CD4-positive, alpha-beta memory T cell (primary cell): ENCODE measurements at regions of chr17 and their contacts with region 1.

Region 1: DNA sequence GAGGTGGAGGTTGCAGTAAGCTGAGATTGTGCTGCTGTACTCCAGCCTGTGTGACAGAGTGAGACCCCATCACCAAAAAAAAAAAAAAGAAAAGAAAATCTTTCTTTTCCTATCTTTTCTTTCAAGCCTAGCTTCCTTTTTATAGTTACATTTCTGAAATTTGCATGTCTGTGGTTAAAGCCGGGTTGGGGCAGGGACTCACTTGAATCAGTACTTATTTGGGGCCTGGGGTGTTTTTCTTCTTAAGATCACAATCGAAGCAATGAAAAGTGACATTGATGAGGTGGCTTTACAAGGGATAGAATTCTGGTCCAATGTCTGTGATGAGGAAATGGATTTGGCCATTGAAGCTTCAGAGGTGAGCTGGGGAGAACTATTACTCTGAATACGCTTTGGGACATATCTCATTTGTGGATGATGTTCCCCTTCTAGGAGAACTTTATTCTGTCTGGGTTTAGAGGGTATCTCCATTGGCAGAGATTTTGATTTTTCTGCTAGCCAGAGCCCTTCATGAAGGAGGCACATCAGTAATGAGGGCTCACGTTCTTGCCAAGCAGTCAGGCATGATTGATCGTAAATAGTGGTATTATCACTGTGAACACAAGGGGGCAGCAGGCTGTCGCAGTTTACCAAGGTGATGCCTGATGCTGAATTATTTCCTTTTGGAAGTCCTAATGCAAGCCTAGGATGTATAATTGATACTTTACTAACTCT is 14.3 kb downstream of the KPNB1 start:
- DNase-seq: peak; percentile 63 to 73 (median 68)
- H3K4me3 ChIP-seq: no peak overlapping the region
- H3K4me3 Mint-ChIP-seq: peak overlapping the region in 1 of 8 donors; percentile 0
- H3K27ac ChIP-seq: peak overlapping the region; percentile 22
- H3K27ac Mint-ChIP-seq: peak overlapping the region; percentile 24 to 90 (median 77)
- H3K4me1 ChIP-seq: peaks cover 32% of the 10 kb centered on the region
- H3K4me1 Mint-ChIP-seq: peaks cover 12 to 22% (median 14%) of the 10 kb centered on the region in 4 donors
- H3K27me3 ChIP-seq: no peaks in the 10 kb centered on the region
- H3K27me3 Mint-ChIP-seq: no peaks in the 10 kb centered on the region

Region 2: DNA sequence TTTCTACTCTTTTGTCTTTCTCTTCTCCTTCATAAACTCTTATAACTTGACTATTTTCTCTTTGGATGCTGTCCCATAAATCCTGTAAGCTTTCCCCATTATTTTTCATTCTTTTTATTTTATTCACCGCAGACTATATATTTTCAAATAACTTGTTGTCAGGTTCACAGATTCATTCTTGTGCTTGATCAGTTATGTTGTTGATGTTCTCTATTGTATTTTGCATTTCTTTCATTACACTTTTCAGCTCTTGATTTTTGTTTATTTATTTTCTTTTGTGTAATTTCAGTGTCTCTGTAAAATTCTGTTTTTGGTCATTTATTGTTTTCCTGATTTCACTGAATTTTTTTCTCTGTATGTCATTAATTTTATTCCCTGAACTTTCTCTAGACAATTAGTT is 291.1 kb before region 1 on chr17:
- CTCF ChIA-PET with region 1: no interaction called
- POLR2A ChIA-PET with region 1: no interaction called
- intact Hi-C with region 1: no loop called
- DNase-seq: no peak
- H3K4me3 ChIP-seq: no peak overlapping the region
- H3K4me3 Mint-ChIP-seq: no peak overlapping the region
- H3K27ac ChIP-seq: no peak overlapping the region
- H3K27ac Mint-ChIP-seq: no peak overlapping the region
- H3K4me1 ChIP-seq: no peaks in the 10 kb centered on the region
- H3K4me1 Mint-ChIP-seq: no peaks in the 10 kb centered on the region
- H3K27me3 ChIP-seq: no peaks in the 10 kb centered on the region
- H3K27me3 Mint-ChIP-seq: peaks cover 3 to 4% of the 10 kb centered on the region in 2 donors

Region 3: DNA sequence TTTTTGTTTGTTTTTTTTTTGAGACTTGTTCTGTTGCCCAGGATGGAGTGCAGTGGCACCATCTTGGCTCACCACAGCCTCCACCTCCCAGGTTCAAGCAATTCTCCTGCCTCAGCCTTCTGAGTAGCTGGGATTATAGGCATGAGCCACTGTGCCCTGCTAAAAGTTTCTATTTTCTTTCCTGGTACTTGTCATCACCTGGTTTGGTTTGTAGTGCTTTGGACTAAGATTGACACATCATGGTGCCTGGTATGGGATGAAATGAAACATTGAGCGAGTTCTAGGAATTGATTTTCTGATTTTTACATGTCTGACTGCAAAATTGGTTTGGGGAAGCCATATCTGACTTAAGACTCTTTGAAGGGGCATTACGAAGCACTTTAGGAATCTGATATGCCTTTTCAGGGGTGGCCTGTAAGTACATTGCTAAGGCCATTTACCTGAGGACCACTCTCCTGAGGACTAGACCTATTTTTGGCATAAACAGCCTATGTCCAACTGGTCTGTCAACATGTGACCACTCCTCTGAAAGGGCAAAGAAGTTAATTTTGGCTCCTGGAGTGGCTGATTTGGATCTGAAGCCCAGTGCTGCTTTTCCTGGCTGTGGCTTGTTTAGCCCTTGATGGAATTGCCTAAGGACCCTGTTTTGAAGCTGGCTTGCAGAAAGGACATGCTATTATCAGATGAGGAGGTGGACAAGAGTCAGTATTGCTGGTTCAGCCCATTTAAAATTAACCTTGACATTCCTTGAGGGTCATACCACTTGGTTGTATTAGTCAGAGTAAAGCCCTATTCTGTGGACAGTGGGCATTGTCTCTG is 11.5 kb after region 1 on chr17:
- CTCF ChIA-PET with region 1: interaction called, 100 read pairs
- POLR2A ChIA-PET with region 1: interaction called, 3 read pairs
- intact Hi-C with region 1: no loop called
- DNase-seq: no peak
- H3K4me3 ChIP-seq: no peak overlapping the region
- H3K4me3 Mint-ChIP-seq: no peak overlapping the region
- H3K27ac ChIP-seq: no peak overlapping the region
- H3K27ac Mint-ChIP-seq: peak overlapping the region in 6 of 7 donors; percentile 4 to 78 (median 68)
- H3K4me1 ChIP-seq: peaks cover 1% of the 10 kb centered on the region
- H3K4me1 Mint-ChIP-seq: peaks cover 0 to 15% (median 8%) of the 10 kb centered on the region in 4 donors
- H3K27me3 ChIP-seq: no peaks in the 10 kb centered on the region
- H3K27me3 Mint-ChIP-seq: no peaks in the 10 kb centered on the region

Region 4: DNA sequence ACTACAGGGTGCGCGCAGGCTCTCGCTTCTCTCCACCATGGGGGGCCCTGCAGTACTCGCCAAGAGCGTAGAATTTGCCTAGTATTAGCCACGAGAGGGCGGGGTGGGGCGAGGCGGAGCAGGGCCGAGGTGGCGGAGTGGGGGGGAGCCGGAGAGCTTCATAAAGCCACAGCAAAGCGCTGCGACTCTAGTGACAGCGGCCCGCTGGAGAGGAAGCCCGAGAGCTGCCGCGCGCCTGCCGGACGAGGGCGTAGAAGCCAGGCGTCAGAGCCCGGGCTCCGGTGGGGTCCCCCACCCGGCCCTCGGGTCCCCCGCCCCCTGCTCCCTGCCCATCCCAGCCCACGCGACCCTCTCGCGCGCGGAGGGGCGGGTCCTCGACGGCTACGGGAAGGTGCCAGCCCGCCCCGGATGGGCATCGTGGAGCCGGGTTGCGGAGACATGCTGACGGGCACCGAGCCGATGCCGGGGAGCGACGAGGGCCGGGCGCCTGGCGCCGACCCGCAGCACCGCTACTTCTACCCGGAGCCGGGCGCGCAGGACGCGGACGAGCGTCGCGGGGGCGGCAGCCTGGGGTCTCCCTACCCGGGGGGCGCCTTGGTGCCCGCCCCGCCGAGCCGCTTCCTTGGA is 69.1 kb after region 1 on chr17 and contains the start of gene TBX21:
- CTCF ChIA-PET with region 1: interaction called, 12 read pairs
- POLR2A ChIA-PET with region 1: interaction called, 6 read pairs
- intact Hi-C with region 1: no loop called
- DNase-seq: peak; percentile 87 to 93 (median 88)
- H3K4me3 ChIP-seq: peak within 1 kb of the TSS; percentile 72 to 83
- H3K4me3 Mint-ChIP-seq: peak within 1 kb of the TSS; percentile 92 to 100 (median 100)
- H3K27ac ChIP-seq: peak within 1 kb of the TSS; percentile 70
- H3K27ac Mint-ChIP-seq: peak within 1 kb of the TSS; percentile 85 to 99 (median 97)
- H3K4me1 ChIP-seq: peaks cover 40% of the 10 kb centered on the region
- H3K4me1 Mint-ChIP-seq: peaks cover 31 to 83% (median 44%) of the 10 kb centered on the region in 4 donors
- H3K27me3 ChIP-seq: no peaks in the 10 kb centered on the region
- H3K27me3 Mint-ChIP-seq: peaks cover 0 to 1% of the 10 kb centered on the region in 2 donors
- total RNA-seq, gene TBX21: 15.8 to 17.9 TPM

Region 5: GRCh38 chr17:47742319-47743181 is 78.5 kb after region 1 on chr17:
- CTCF ChIA-PET with region 1: interaction called, 32 read pairs
- POLR2A ChIA-PET with region 1: interaction called, 6 read pairs
- intact Hi-C with region 1: loop called (anchors 1 kb)
- DNase-seq: peak in 4 of 5 donors; percentile 39 to 48 (median 42)
- H3K4me3 ChIP-seq: no peak overlapping the region
- H3K4me3 Mint-ChIP-seq: peak overlapping the region in 5 of 8 donors; percentile 12 to 80 (median 61)
- H3K27ac ChIP-seq: no peak overlapping the region
- H3K27ac Mint-ChIP-seq: peak overlapping the region in 4 of 7 donors; percentile 17 to 81 (median 60)
- H3K4me1 ChIP-seq: peaks cover 35% of the 10 kb centered on the region
- H3K4me1 Mint-ChIP-seq: peaks cover 18 to 40% (median 28%) of the 10 kb centered on the region in 4 donors
- H3K27me3 ChIP-seq: no peaks in the 10 kb centered on the region
- H3K27me3 Mint-ChIP-seq: no peaks in the 10 kb centered on the region

Region 6: DNA sequence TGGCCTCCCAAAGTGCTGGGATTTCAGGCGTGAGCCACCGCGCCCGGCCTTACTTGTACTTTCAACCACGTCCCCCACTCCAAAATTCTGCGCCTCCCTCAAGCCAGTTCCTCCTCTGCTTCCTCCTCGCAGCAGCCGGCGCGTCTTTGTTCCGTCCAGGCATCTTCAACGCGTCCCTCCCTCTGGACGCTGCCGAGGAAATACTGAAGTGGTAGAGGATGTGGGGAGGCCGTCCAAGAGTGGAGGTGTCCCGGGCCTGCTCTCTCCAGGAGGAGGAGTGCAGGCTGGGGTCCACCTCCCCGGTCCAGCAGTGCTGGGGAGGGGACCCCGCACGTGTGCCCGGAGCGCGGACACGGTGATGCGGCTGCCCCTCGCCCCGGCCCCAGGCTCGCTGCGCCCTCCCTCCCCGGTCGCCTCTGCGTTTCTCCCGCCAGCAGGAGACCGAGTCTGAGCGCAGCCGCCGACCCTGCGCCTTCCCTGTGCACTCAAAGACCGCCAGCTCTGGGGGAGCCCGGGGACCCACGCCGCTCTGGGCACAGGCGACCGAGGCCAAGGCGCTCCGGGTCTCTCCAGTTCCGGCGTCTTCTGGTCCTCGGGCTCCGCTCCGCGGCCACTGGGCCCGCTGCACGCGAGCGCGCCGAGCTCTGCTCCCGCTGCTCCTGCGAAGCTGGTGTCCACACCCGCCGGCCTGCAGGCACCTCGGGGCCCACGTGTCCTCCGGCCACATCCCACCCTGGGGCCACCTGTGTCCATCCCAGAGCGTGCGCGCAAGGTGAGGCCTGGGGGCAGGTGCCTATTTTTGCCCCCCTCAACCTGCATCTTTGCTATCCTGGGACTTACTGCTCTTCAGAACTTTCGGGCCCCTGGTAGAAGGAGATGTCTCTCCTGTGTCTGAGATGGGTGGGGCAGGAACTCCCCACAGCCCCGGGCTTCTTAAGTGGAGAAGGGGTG is 125.8 kb after region 1 on chr17:
- CTCF ChIA-PET with region 1: interaction called, 13 read pairs
- POLR2A ChIA-PET with region 1: no interaction called
- intact Hi-C with region 1: loop called (anchors 1 kb)
- DNase-seq: peak in 4 of 5 donors; percentile 39 to 54 (median 44)
- H3K4me3 ChIP-seq: peak overlapping the region in 1 of 2 donors; percentile 37
- H3K4me3 Mint-ChIP-seq: peak overlapping the region; percentile 31 to 86 (median 78)
- H3K27ac ChIP-seq: no peak overlapping the region
- H3K27ac Mint-ChIP-seq: peak overlapping the region in 1 of 7 donors; percentile 43
- H3K4me1 ChIP-seq: peaks cover 9% of the 10 kb centered on the region
- H3K4me1 Mint-ChIP-seq: peaks cover 2 to 18% (median 10%) of the 10 kb centered on the region in 4 donors
- H3K27me3 ChIP-seq: peaks cover 11% of the 10 kb centered on the region
- H3K27me3 Mint-ChIP-seq: peaks cover 34 to 36% of the 10 kb centered on the region in 2 donors

Region 7: DNA sequence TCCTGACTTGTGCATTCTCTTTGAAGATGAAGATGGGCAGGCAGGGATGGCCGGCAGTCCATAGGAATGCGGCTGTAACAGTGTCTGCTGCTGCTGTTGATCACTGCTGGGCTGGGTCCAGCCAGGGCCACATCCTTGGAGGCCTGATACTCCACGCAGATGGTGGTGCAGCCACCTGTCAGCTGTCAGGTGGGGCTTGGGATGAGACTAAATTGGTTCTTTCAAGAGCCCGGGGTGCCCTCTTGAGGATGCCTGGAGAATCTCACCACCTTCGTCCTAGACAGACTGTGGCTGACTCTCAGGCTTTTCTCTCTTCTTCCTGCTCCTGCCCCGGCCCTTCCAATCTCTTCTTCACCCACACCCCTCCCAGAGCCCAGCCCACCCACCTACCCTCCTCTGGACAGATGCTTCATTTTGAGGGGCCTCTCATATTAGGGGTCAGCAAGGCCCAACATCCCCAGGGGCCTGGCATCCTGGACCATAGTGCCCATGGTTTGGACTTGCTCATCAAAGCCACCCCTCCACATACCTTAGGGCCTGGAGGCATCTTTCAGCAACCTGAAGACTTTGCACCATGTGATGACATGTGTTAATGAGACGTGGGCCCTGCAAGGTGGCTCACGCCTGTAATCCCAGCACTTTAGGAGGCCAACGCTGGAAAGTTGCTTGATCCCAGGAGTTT is 138.4 kb after region 1 on chr17:
- CTCF ChIA-PET with region 1: interaction called, 11 read pairs
- POLR2A ChIA-PET with region 1: interaction called, 3 read pairs
- intact Hi-C with region 1: loop called (anchors 1 kb)
- DNase-seq: peak; percentile 52 to 62 (median 57)
- H3K4me3 ChIP-seq: no peak overlapping the region
- H3K4me3 Mint-ChIP-seq: no peak overlapping the region
- H3K27ac ChIP-seq: no peak overlapping the region
- H3K27ac Mint-ChIP-seq: peak overlapping the region in 2 of 7 donors; percentile 56 to 57
- H3K4me1 ChIP-seq: no peaks in the 10 kb centered on the region
- H3K4me1 Mint-ChIP-seq: no peaks in the 10 kb centered on the region
- H3K27me3 ChIP-seq: no peaks in the 10 kb centered on the region
- H3K27me3 Mint-ChIP-seq: peaks cover 1 to 3% of the 10 kb centered on the region in 2 donors